Psoas muscle (tissue), 8 donors: ENCODE measurements at regions of chr20 and their contacts with region 1.

Region 1: GRCh38 chr20:62500237-62500864 is 24.6 kb upstream of the GATA5 start:
- DNase-seq: peak; percentile 84 to 93
- ATAC-seq: peak; percentile 68 to 80 (median 77)
- H3K4me3 ChIP-seq: no peak overlapping the region
- H3K27ac ChIP-seq: peak overlapping the region; percentile 63
- H3K4me1 ChIP-seq: peaks cover 44% of the 10 kb centered on the region
- H3K27me3 ChIP-seq: peaks cover 0 to 3% (median 0%) of the 10 kb centered on the region in 3 donors
- CTCF ChIP-seq: peak; percentile 75

Region 2: DNA sequence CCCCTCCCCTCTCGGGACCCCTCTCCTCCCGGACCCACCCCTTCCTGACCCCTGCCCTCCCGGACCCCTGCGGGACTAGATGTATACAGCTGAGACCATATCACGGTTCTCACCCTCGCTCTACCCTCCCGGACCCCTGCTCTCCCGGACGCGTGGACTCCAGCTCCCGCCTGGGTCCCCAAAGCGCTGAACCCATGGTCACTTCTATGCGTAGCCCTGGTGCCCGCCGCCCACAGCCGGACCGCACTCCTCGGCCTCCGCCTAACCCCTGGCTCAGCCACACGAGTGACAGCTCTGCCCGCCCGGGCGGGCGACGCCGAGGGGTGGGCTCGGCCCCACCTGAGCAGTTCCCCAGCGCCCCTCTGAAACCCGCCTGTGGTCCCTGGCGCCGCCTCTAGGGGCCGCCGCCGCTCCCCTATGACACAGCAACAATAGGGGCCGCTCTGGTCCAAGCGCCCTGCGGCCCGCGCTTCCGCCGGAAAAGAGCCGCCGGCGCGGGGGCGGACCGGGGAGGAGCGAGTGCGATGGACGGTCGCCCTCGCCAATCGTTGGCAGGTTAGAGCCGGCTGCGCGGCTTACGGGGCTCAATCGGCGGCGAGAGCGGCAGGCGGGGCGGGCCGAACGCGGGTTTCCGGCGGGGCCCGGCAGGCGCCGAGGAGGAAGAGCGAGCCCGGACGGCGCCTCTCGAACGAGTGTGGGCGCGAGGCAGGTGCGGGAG is 197.9 kb before region 1 on chr20 and contains the start of gene ADRM1:
- intact Hi-C with region 1: loop called in 1 of 2 experiments (anchors 10 kb)
- DNase-seq: peak; percentile 97 to 98
- ATAC-seq: peak; percentile 84 to 87 (median 85)
- H3K4me3 ChIP-seq: peak within 1 kb of the TSS; percentile 84
- H3K27ac ChIP-seq: peak within 1 kb of the TSS; percentile 99
- H3K4me1 ChIP-seq: peaks cover 28% of the 10 kb centered on the region
- H3K27me3 ChIP-seq: no peaks in the 10 kb centered on the region
- CTCF ChIP-seq: peak; percentile 95
- total RNA-seq, gene ADRM1: 142 to 280 (median 238) TPM

Region 3: DNA sequence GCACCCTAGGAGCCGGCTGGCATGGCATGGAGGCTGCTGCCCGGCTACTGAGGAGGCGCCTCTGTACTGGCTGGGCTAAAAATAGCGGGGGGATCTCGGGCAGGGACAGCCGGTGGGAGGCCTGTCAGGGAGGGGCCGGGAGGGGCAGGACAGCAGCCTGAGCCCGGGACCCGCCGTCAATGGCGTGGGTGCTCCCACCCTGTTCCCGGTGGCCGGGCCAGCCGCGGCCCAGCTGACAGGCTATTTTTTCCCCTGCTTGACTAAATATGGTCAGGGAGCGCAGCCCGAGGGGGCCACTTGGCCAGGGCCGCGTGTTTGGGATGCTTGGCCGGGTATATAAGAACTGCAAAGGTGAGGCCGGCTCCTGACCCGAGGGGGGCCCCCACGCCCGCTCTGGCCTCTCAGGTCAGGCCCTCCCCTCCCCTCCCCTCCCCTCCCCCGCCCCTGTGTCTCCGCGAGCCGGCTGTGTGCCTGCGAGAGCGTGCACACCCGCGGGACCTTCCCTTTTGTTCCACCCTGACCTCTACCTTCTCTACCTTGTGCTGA is 49.8 kb after region 1 on chr20:
- intact Hi-C with region 1: loop called in 1 of 2 experiments (anchors 5 kb)
- DNase-seq: peak; percentile 81 to 95
- ATAC-seq: peak; percentile 75 to 84 (median 78)
- H3K4me3 ChIP-seq: peak overlapping the region; percentile 79
- H3K27ac ChIP-seq: peak overlapping the region; percentile 92
- H3K4me1 ChIP-seq: peaks cover 18% of the 10 kb centered on the region
- H3K27me3 ChIP-seq: peaks cover 0 to 5% (median 0%) of the 10 kb centered on the region in 3 donors
- CTCF ChIP-seq: no peak

Region 4: DNA sequence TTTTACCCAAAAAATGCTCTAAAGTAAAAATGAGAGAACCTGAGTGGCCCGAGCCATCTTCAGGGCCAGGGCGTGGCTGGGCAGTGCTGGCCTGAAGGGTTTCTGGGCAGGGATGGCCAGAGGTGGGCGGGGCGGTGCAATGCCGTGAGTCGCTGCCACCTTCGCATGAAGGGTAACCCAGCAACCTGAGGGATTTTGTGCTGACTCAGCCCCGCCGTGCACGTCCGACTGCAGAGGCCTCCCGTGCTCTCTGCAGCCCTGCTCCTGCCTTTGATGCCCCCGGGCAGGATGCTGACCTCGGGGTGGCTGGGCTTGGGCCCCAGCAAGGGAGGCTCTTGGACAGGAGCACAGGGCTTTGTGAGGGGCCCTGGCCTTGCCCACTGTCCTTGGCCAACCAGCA is 57.1 kb after region 1 on chr20:
- intact Hi-C with region 1: loop called (anchors 2 to 5 kb)
- DNase-seq: peak in 1 of 2 donors; percentile 48
- ATAC-seq: peak; percentile 5 to 18 (median 12)
- H3K4me3 ChIP-seq: peak overlapping the region; percentile 79
- H3K27ac ChIP-seq: peak overlapping the region; percentile 92
- H3K4me1 ChIP-seq: peaks cover 59% of the 10 kb centered on the region
- H3K27me3 ChIP-seq: no peaks in the 10 kb centered on the region
- CTCF ChIP-seq: no peak

Region 5: DNA sequence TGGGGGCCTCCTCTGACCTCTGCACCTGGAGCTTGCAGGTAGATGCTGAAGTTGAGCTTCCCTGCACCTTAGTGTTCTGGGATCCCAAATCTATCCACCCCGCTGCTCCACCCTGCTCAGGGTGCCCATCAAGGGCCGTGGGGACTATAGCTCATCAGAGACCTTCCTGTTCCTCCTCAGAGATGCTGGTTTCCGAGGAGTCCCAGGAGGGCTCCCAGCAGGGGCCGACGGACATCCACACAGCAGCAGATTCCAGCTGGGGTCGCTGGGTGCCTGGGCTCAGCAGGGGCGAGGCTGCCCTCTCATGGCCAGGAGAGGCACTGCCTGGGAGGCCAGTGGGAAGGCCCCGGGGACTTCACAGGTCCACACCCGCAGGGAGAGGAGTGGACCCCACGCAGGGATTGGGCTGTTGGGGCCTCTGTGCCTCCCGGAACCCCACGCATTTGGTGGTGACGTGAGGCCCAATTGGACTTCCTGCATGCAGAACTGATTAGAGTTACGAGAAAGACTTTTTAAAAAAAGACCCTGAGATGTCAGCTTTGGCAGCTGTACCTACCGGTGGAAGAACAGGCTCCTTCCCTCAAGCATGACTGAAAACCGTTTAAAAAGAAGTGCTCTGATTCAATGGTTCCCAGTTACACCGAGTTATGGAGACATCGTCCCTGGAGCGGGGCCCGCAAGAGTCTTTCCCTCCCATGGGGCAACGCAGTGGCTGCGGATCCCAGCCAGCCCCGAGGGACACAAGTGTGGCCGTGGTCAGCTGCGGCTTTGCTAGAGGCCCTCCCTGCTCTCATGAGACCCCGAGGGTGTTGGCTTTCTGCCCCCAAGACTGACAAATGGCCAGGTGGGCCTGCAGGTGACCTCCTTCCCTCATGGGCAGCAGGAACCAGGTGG is 116.6 kb after region 1 on chr20:
- intact Hi-C with region 1: loop called (anchors 1 to 5 kb)
- DNase-seq: peak; percentile 75 to 88
- ATAC-seq: peak; percentile 89 to 95 (median 90)
- H3K4me3 ChIP-seq: no peak overlapping the region
- H3K27ac ChIP-seq: peak overlapping the region; percentile 58
- H3K4me1 ChIP-seq: peaks cover 4% of the 10 kb centered on the region
- H3K27me3 ChIP-seq: peaks cover 0 to 11% (median 5%) of the 10 kb centered on the region in 3 donors
- CTCF ChIP-seq: peak; percentile 91

Region 6: GRCh38 chr20:62793912-62794724 is 293.8 kb after region 1 on chr20:
- intact Hi-C with region 1: loop called in 1 of 2 experiments (anchors 5 kb)
- DNase-seq: peak; percentile 97 to 98
- ATAC-seq: peak; percentile 90 to 91 (median 90)
- H3K4me3 ChIP-seq: peak overlapping the region; percentile 70
- H3K27ac ChIP-seq: peak overlapping the region; percentile 81
- H3K4me1 ChIP-seq: peaks cover 16% of the 10 kb centered on the region
- H3K27me3 ChIP-seq: peaks cover 0 to 5% (median 0%) of the 10 kb centered on the region in 3 donors
- CTCF ChIP-seq: no peak

Region 7: DNA sequence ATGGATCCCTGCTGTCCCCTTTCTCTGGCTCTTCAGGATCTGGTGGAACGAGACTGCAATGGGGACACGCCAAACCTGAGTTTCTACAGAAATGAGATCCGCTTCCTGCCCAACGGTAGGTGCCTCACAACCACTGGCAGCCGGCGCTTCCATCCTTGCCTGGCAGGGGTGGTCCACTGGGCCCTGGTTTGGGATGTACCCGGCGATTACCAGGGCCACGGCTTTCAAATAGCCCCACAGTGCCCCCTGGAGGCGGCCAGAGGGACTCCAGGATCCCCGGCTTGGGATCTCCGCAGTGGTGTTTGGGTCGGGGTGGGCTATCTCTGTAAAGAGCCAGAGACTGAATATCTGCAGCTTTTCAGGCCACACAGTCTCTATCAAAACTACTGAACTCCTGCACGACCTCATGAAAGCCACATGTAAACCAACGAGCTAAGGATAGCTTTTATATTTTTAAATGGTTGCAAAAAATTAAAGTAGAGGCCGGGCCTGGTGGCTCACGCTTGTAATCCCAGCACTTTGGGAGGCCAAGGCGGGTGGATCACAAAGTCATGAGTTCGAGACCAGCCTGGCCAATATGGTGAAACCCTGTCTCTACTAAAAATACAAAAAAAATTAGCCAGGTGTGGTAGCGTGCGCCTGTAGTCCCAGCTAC is 308.0 kb after region 1 on chr20:
- intact Hi-C with region 1: loop called in 1 of 2 experiments (anchors 5 kb)
- DNase-seq: peak; percentile 77 to 83
- ATAC-seq: peak; percentile 61 to 77 (median 67)
- H3K4me3 ChIP-seq: no peak overlapping the region
- H3K27ac ChIP-seq: no peak overlapping the region
- H3K4me1 ChIP-seq: peaks cover 13% of the 10 kb centered on the region
- H3K27me3 ChIP-seq: no peaks in the 10 kb centered on the region
- CTCF ChIP-seq: peak; percentile 92

Region 8: GRCh38 chr20:62926239-62927104 is 426.1 kb after region 1 on chr20 and contains the start of gene DIDO1:
- intact Hi-C with region 1: no loop called
- DNase-seq: peak; percentile 89 to 93
- ATAC-seq: peak; percentile 87 to 91 (median 89)
- H3K4me3 ChIP-seq: peak within 1 kb of the TSS; percentile 99
- H3K27ac ChIP-seq: peak within 1 kb of the TSS; percentile 97
- H3K4me1 ChIP-seq: peaks cover 66% of the 10 kb centered on the region
- H3K27me3 ChIP-seq: no peaks in the 10 kb centered on the region
- CTCF ChIP-seq: peak; percentile 82
- total RNA-seq, gene DIDO1: 23.0 to 32.4 (median 27.9) TPM